A673 (cell line): ENCODE measurements at regions of chr4 and their contacts with region 1.

Region 1: DNA sequence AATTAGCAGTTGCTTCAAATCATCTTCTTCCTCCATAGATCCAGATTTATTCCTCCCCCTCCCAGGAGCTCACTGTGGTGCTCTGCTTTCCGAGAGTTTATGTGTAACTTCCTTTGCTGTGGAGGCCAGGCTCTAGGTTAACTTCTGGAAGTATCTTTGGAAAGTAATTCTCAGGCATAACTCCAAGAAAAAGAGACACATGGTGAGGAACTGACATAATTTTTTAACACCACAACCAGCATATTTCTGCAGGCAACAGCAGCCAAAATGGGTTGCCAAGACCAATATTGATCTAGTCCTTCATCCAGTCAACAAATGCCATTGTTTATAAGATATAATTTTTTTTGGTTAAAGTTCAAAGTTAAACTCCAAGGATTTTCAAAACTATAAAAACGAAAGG is 114.5 kb upstream of the RBPJ start:
- DNase-seq: no peak
- H3K4me3 ChIP-seq: no peak overlapping the region
- H3K27ac ChIP-seq: no peak overlapping the region
- H3K4me1 ChIP-seq: no peaks in the 10 kb centered on the region
- H3K27me3 ChIP-seq: peaks cover 59% of the 10 kb centered on the region
- CTCF ChIP-seq: no peak

Region 2: DNA sequence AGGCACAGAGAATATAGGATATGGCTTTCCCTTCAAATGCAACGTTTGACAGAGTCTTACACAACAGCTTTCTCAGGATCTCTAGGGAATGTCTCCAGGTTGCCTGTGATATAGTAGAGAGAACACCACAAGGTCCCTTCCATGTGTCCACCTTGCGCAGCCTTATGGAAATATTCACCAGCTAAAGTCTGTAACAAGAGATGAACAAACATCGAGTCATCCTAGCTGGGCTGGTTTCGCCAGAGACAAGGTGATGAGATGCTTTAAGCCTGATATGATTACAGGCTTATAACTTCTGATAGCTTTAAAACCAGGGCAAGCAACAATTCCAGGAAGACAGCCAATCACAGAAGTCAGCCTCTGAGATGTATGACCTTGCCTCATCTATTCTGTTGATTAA is 427.3 kb before region 1 on chr4:
- CTCF ChIA-PET with region 1: no interaction called
- POLR2A ChIA-PET with region 1: no interaction called
- intact Hi-C with region 1: no loop called
- DNase-seq: no peak
- H3K4me3 ChIP-seq: no peak overlapping the region
- H3K27ac ChIP-seq: no peak overlapping the region
- H3K4me1 ChIP-seq: no peaks in the 10 kb centered on the region
- H3K27me3 ChIP-seq: no peaks in the 10 kb centered on the region
- CTCF ChIP-seq: no peak

Region 3: GRCh38 chr4:26192899-26193778 is 13.2 kb before region 1 on chr4:
- CTCF ChIA-PET with region 1: no interaction called
- POLR2A ChIA-PET with region 1: interaction called, 12 read pairs
- intact Hi-C with region 1: no loop called
- DNase-seq: no peak
- H3K4me3 ChIP-seq: no peak overlapping the region
- H3K27ac ChIP-seq: no peak overlapping the region
- H3K4me1 ChIP-seq: no peaks in the 10 kb centered on the region
- H3K27me3 ChIP-seq: no peaks in the 10 kb centered on the region
- CTCF ChIP-seq: 0 out of 2 replicates have a peak, but pooled peaks have one; percentile 13